A549 (cell line): ENCODE measurements at regions of chr20 and their contacts with region 1.

Region 1: GRCh38 chr20:20083807-20084206 is 31.5 kb downstream of the CFAP61 start:
- DNase-seq: peak; percentile 29 to 39
- ATAC-seq: peak; percentile 71 to 89; a peak in 4 of 6 replicates
- H3K4me3 ChIP-seq: no peak overlapping the region
- H3K27ac ChIP-seq: no peak overlapping the region
- H3K4me1 ChIP-seq: no peaks in the 10 kb centered on the region
- CTCF ChIP-seq: peak; percentile 83
- EP300 ChIP-seq: no peak
- POLR2A ChIP-seq: no peak
- RAD21 ChIP-seq: peak; percentile 82 to 85

Region 2: GRCh38 chr20:20237093-20237959 is 153.5 kb after region 1 on chr20:
- CTCF ChIA-PET with region 1: interaction called, 24 read pairs
- POLR2A ChIA-PET with region 1: no interaction called
- DNase-seq: peak; percentile 40 to 76
- ATAC-seq: peak; percentile 78 to 93
- H3K4me3 ChIP-seq: no peak overlapping the region
- H3K27ac ChIP-seq: no peak overlapping the region
- H3K4me1 ChIP-seq: no peaks in the 10 kb centered on the region
- CTCF ChIP-seq: peak; percentile 60
- EP300 ChIP-seq: no peak
- POLR2A ChIP-seq: no peak
- RAD21 ChIP-seq: peak; percentile 46 to 61; a peak in 4 of 5 replicates

Region 3: DNA sequence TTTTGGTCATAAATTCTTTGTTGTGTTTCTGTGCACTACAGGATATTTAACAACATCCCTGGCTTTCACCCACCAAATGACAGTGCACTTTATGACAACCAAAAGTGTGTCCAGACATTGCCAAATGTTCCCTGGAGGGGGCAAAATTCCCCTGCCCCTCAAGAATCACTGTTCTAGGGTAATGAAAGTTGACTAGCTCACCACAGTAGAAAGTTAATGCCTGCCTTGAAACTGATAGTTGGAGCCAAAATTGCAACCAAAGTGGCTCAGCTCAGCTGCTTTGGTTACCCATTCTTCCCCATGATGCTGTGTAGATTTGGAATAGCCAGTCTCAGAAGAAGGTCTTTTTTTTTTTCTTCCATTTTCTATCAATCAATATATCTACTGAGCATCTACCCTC is 478.0 kb after region 1 on chr20:
- CTCF ChIA-PET with region 1: interaction called, 20 read pairs
- POLR2A ChIA-PET with region 1: no interaction called
- DNase-seq: no peak
- ATAC-seq: no peak
- H3K4me3 ChIP-seq: no peak overlapping the region
- H3K27ac ChIP-seq: no peak overlapping the region
- H3K4me1 ChIP-seq: no peaks in the 10 kb centered on the region
- CTCF ChIP-seq: no peak
- EP300 ChIP-seq: no peak
- POLR2A ChIP-seq: no peak
- RAD21 ChIP-seq: no peak

Region 4: GRCh38 chr20:20568604-20569205 is 484.9 kb after region 1 on chr20:
- CTCF ChIA-PET with region 1: interaction called, 20 read pairs
- POLR2A ChIA-PET with region 1: no interaction called
- DNase-seq: peak; percentile 18 to 59
- ATAC-seq: peak in 1 of 2 experiments; percentile 60; a peak in 2 of 6 replicates
- H3K4me3 ChIP-seq: no peak overlapping the region
- H3K27ac ChIP-seq: no peak overlapping the region
- H3K4me1 ChIP-seq: no peaks in the 10 kb centered on the region
- CTCF ChIP-seq: peak; percentile 96
- EP300 ChIP-seq: no peak
- POLR2A ChIP-seq: no peak
- RAD21 ChIP-seq: peak; percentile 91 to 94

Region 5: GRCh38 chr20:20593447-20594170 is 509.8 kb after region 1 on chr20:
- CTCF ChIA-PET with region 1: interaction called, 52 read pairs
- POLR2A ChIA-PET with region 1: no interaction called
- DNase-seq: peak; percentile 51 to 61
- ATAC-seq: peak; percentile 93 to 94
- H3K4me3 ChIP-seq: no peak overlapping the region
- H3K27ac ChIP-seq: no peak overlapping the region
- H3K4me1 ChIP-seq: no peaks in the 10 kb centered on the region
- CTCF ChIP-seq: peak; percentile 71
- EP300 ChIP-seq: no peak
- POLR2A ChIP-seq: no peak
- RAD21 ChIP-seq: peak; percentile 32 to 39; a peak in 4 of 5 replicates